Esophagus squamous epithelium (tissue), 5 donors: ENCODE measurements at regions of chr3 and their contacts with region 1.

Region 1: GRCh38 chr3:132722164-132723024 is at the start of gene NPHP3:
- DNase-seq: peak; percentile 97
- H3K4me3 ChIP-seq: peak within 1 kb of the TSS; percentile 61 to 86 (median 81)
- H3K27ac ChIP-seq: peak within 1 kb of the TSS; percentile 92 to 98 (median 95)
- H3K4me1 ChIP-seq: peaks cover 16 to 48% (median 17%) of the 10 kb centered on the region in 3 donors
- H3K27me3 ChIP-seq: no peaks in the 10 kb centered on the region
- CTCF ChIP-seq: peak in 1 of 6 experiments; percentile 10
- POLR2A ChIP-seq: peak in 2 of 4 donors; percentile 68 to 90
- total RNA-seq, gene NPHP3: 7.1 to 27.8 (median 9.1) TPM

Region 2: DNA sequence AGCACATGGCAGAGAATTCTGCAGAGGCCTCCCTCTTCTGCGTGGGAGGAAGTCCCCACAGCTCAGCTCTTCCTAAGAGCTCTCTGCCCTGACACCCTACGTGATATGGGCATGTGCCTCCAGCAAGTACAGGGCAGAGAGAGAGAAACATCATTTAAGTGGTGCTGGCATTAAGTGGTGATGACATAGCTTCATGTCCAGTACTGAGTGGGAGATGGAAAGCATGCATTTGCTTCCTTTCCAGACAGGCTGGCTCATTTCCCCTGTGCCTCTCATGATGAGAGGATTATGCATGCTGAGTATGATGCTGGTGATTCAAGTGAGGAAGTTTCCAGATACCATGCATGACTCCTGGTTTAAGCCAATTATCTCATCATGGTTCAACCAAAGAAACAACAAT is 704.3 kb after region 1 on chr3:
- intact Hi-C with region 1: loop called (anchors 10 kb)
- DNase-seq: no peak
- H3K4me3 ChIP-seq: no peak overlapping the region
- H3K27ac ChIP-seq: no peak overlapping the region
- H3K4me1 ChIP-seq: peaks cover 0 to 18% (median 0%) of the 10 kb centered on the region in 3 donors
- H3K27me3 ChIP-seq: peaks cover 0 to 18% (median 0%) of the 10 kb centered on the region in 4 donors
- CTCF ChIP-seq: no peak
- POLR2A ChIP-seq: no peak